ENCODE measurements at regions of chr3 and their contacts with region 1.

Region 1: GRCh38 chr3:64224826-64225610 is at the start of gene PRICKLE2:
- DNase-seq: peak; percentile 91 to 96
- ATAC-seq: peak; percentile 85
- H3K4me3 ChIP-seq: peak within 1 kb of the TSS; percentile 34 to 60
- H3K27ac ChIP-seq: peak within 1 kb of the TSS; percentile 12 to 98
- H3K4me1 ChIP-seq: no peaks in the 10 kb centered on the region
- H3K27me3 ChIP-seq: no peaks in the 10 kb centered on the region
- total RNA-seq, gene PRICKLE2: 22.0 to 42.1 TPM

Region 2: DNA sequence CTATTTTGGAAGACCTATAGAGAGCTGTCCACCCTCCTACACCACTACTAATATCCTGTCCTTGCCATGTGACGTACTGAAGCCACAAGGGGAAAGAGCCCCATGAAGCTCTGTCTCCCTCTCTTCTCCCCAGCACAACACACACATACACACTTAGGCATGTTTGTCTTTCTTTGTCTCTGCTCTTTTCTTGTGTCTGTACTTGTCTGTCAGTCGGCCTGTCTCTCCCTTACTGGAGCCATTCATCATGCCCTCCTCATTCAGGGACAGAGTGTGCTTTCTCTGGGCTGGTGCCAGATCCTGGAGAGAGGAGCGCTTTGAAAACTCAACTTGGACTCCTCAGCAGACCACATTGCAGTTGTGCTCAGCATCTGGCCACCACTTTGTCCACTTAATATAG is 249.3 kb before region 1 on chr3:
- intact Hi-C with region 1: no loop called
- DNase-seq: peak in 1 of 2 donors; percentile 61
- ATAC-seq: peak; percentile 30
- H3K4me3 ChIP-seq: no peak overlapping the region
- H3K27ac ChIP-seq: no peak overlapping the region
- H3K4me1 ChIP-seq: peaks cover 7 to 11% of the 10 kb centered on the region in 2 donors
- H3K27me3 ChIP-seq: no peaks in the 10 kb centered on the region

Region 3: GRCh38 chr3:64030741-64031140 is 194.3 kb before region 1 on chr3:
- intact Hi-C with region 1: no loop called
- DNase-seq: peak; percentile 72 to 90
- ATAC-seq: peak; percentile 93
- H3K4me3 ChIP-seq: no peak overlapping the region
- H3K27ac ChIP-seq: no peak overlapping the region
- H3K4me1 ChIP-seq: no peaks in the 10 kb centered on the region
- H3K27me3 ChIP-seq: no peaks in the 10 kb centered on the region

Region 4: GRCh38 chr3:64163755-64164148 is 61.3 kb before region 1 on chr3:
- intact Hi-C with region 1: no loop called
- DNase-seq: no peak
- ATAC-seq: no peak
- H3K4me3 ChIP-seq: no peak overlapping the region
- H3K27ac ChIP-seq: no peak overlapping the region
- H3K4me1 ChIP-seq: peaks cover 2 to 6% of the 10 kb centered on the region in 2 donors
- H3K27me3 ChIP-seq: no peaks in the 10 kb centered on the region

Region 5: DNA sequence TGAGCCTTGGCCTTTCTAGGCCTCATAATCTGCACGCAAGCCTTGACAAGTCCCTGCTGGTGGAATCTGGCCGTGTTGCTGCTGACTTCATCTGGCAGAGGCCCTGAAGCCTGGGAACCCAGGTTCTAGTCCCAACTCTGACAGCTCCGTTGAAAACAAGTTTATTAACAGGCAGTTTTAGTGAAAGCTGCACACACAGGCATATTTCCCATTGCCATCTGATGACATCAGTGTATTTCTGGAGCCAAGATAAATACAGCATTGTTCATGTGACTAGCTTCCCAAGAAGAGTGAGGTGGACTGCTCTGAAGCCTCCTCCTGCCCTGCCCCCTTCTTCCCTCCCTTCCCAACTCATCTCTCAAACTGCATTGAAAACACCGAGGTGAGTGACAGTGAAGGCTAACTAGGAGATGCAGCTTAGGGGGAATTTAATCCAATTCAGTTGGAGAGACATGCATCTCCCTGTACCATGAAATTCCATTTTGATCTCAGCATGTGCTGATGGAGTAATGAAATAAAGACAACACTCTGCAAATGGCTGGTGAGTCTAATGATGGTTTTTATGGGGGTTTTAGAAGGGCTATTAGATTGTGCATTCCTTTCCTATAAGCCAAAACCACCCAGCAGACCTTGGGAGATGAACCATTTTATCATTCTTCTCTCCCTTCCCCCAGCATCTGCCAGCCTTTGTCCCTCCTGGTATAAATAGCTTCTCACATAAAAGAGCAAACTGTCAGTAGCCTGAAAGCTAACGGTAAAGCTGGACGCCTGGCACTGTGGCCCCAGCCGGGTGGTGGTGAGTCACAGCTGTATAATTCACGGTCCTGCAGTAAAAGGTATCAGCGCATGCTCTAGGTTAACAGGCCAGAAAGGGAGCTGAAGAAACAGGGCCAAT is 37.7 kb before region 1 on chr3:
- intact Hi-C with region 1: loop called (anchors 5 kb)
- DNase-seq: peak; percentile 82 to 84
- ATAC-seq: peak; percentile 71
- H3K4me3 ChIP-seq: no peak overlapping the region
- H3K27ac ChIP-seq: peak overlapping the region; percentile 1 to 56
- H3K4me1 ChIP-seq: peaks cover 0 to 18% of the 10 kb centered on the region in 2 donors
- H3K27me3 ChIP-seq: no peaks in the 10 kb centered on the region

Region 6: GRCh38 chr3:64267721-64268604 is 42.9 kb after region 1 on chr3:
- intact Hi-C with region 1: loop called (anchors 5 kb)
- DNase-seq: peak; percentile 76 to 82
- ATAC-seq: peak; percentile 93
- H3K4me3 ChIP-seq: peak overlapping the region; percentile 62 to 73
- H3K27ac ChIP-seq: peak overlapping the region in 1 of 2 donors; percentile 77
- H3K4me1 ChIP-seq: peaks cover 0 to 12% of the 10 kb centered on the region in 2 donors
- H3K27me3 ChIP-seq: no peaks in the 10 kb centered on the region